ENCODE measurements at regions of chr14 and their contacts with region 1.

Region 1: GRCh38 chr14:65832431-65833266 is 420.1 kb downstream of the FUT8 start:
- ATAC-seq: peak; percentile 23 to 80 (median 36)
- H3K4me3 ChIP-seq: no peak overlapping the region
- H3K27ac ChIP-seq: no peak overlapping the region
- H3K4me1 ChIP-seq: peaks cover 6% of the 10 kb centered on the region in 2 donors

Region 2: DNA sequence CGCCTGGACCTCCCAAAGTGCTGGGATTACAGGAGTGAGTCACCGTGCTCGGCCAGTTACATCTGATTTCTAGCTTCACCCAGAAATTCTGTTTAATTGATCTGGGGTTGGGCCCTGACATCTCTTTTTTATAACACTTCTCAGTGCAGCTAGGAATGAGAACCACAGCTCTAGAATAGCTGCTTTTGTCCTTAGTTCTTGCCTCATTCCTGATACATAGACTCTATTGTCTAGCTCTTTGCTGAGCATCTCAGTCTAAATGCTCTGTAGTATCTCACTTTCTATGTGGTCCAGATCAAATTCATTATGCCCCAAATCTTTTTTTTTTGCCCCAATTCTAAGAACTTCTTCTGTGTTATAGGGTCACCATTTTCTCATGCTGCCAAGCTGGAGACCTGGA is 450.1 kb before region 1 on chr14:
- in situ Hi-C with region 1: no loop called
- ATAC-seq: no peak
- H3K4me3 ChIP-seq: no peak overlapping the region
- H3K27ac ChIP-seq: no peak overlapping the region
- H3K4me1 ChIP-seq: peaks cover 0 to 2% of the 10 kb centered on the region in 2 donors

Region 3: GRCh38 chr14:66070509-66071319 is 238.1 kb after region 1 on chr14:
- in situ Hi-C with region 1: loop called in 1 of 9 experiments (anchors 25 kb)
- ATAC-seq: peak; percentile 31 to 76 (median 57)
- H3K4me3 ChIP-seq: no peak overlapping the region
- H3K27ac ChIP-seq: no peak overlapping the region
- H3K4me1 ChIP-seq: peaks cover 10 to 14% of the 10 kb centered on the region in 2 donors

Measured in motor neuron (in vitro differentiated cells).